Cardiac septum (tissue), 1 donor: ENCODE measurements at regions of chr13 and their contacts with region 1.

Region 1: GRCh38 chr13:30408319-30409101 is 13.8 kb upstream of the UBE2L5 start:
- DNase-seq: peak; percentile 97

Region 2: DNA sequence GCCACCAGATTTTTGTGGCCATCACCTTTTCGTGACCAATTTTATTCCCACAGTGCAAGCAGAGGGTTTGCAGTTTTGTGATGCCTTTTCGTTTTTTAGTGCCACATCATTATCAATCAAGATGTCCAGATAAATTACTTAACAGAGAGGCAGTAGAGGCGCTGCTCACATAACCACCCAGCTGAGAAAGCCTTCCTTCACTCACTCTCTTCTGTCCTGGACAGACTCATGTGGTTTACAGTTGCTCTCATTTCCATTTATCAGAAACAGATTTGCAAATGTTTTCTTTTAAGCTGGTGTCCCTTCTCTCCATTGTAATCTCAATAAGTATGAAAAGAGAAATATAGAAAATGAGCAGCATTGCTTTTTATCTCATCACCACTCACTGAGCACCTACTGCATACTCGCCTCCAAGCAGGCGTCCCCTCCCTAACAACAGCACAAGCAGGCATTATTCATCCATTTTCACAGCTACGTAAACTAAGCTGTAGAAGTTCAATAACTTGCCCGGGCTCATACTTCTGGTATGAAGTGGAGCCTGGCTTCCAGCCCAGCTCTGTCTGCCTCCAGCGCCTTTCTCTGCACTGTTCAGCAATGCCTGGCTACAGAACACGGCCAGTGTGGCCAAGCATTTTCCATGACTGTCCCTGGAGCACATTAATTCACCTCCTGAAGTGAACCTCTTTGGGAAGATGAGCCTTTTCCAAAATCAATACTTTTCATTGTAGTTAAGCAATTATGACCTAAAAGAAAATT is 66.5 kb before region 1 on chr13:
- intact Hi-C with region 1: loop called (anchors 1 kb)
- DNase-seq: peak; percentile 85

Region 3: GRCh38 chr13:30364876-30365275 is 43.6 kb before region 1 on chr13:
- intact Hi-C with region 1: no loop called
- DNase-seq: no peak

Region 4: DNA sequence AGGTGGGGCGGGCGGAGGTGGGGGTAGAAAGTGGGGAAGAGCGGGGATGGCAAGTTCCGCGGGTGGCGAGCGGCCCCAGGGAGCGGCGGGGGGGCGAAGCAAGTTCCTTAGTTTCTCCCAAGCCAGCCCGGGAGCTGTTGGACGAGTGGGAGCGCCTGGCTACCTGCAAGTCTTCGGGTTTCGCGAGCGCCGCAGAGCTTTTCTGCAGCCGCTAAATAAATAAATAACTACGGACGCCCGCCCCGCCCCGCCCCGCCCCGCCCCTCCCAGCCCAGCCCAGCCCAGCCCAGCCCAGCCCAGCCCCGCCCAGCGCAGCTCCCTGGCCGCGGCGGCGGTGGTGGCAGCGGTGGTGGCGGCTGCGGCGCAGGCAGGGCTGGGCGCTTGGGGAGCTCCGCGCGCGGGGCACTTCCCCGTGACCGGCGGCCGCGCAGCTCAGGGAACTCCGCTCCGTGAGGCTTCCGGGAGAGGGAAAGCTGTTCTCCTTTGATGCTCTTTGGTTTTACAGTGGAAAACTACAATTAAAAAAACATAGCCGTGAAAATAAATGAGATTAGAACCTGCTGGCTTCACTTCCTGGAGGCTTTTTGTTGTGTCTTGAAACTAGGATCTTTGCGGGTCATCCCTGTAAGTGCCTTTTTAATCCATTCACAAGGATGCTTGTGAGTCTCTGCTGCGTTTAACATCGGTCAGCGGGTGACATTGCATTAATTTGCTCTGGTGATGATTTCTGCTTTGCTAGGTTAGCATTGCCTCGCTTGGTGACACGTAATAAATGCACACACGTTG is 13.7 kb after region 1 on chr13 and contains the start of gene UBE2L5:
- intact Hi-C with region 1: loop called (anchors 1 kb)
- DNase-seq: peak; percentile 91
- total RNA-seq, gene UBE2L5: not detected

Region 5: GRCh38 chr13:30446126-30446500 is 37.6 kb after region 1 on chr13:
- intact Hi-C with region 1: loop called (anchors 5 kb)
- DNase-seq: no peak

Region 6: GRCh38 chr13:30477346-30478195 is 69.1 kb after region 1 on chr13:
- intact Hi-C with region 1: no loop called
- DNase-seq: no peak